ENCODE measurements at regions of chr13 and their contacts with region 1.

Region 1: DNA sequence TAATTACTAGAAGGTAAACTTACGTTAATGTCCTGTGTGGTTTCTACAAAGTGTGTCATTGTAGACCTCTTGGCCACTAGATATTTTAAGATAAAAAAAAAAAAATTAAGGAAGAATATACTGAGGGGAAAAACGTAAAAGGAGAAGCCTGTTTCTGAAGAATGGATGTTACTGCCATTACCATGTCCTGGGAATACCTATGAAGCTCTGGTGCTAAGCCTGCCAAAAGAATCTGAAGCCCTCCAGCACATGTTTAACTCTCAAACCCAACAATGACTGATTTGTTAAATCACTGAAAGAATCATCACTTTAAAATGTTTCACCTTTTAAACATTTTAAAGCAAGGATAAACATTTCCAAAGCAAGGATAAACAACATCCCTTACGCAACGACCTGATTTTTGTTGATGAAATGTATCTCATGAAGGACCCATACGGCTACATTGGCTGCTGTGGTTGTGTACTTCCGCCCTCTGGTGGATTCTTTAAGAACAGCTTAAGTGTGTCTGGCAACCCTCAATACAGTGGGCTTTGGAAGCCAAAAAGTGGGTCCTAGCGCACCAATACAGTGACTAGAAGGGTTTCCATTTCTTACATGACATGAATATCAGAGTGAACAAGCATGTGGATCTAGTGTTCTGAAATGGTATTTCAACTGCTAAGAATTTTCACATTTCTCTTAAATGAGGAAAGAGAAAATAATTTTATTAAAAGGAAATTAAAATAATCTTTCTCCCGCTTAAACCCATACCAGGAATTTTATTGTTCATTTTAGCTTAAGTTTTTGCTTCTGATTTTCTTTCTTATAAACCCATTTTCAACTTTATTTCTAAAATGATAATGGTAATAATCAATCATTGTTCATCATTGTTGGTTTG is 74.5 kb upstream of the RAP2A start:
- DNase-seq: no peak
- ATAC-seq: peak; percentile 94
- H3K4me3 Mint-ChIP-seq: no peak overlapping the region
- H3K27ac Mint-ChIP-seq: no peak overlapping the region
- H3K4me1 Mint-ChIP-seq: no peaks in the 10 kb centered on the region
- H3K27me3 Mint-ChIP-seq: no peaks in the 10 kb centered on the region
- CTCF ChIP-seq: peak; percentile 33

Region 2: DNA sequence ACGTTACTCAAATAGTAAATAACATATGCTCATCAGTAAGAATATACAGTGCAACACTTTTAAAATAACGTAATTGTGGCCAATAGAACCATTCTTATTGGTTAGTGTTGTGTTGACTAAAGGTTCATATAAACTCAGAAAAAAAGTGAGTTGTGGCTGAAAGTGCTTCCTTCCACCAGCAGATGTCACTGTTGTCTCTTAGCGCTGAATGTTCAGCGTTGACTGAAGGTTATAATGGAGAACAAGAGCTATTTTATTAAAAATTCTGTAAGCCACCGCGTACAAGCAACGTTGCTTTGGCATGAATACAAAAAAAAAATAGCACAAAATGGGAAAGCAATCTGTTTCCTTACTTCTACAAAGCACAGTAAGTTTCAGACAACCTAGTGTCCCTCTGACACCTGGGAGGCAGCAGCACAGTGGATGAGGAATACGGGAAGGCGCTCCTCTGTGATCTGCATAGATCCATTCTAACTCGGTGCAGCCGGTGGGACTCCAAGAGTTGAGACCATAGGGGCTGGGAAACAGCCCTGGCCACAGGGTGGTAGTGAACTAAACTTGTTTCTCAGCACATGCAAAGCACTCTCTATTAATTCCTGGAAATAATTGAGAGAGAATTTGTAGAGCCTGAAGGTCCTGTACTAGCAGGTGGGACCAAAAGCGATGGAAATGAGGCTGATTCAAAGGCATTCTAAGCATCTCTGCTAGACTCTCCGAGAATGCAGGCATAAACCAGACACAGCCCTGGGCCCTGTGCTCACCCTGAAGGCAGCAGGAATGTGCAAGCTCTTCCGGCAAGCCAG is 341.2 kb before region 1 on chr13:
- CTCF ChIA-PET with region 1: interaction called, 14 read pairs
- POLR2A ChIA-PET with region 1: no interaction called
- intact Hi-C with region 1: loop called (anchors 1 kb)
- DNase-seq: no peak
- ATAC-seq: peak; percentile 54
- H3K4me3 Mint-ChIP-seq: no peak overlapping the region
- H3K27ac Mint-ChIP-seq: no peak overlapping the region
- H3K4me1 Mint-ChIP-seq: peaks cover 3% of the 10 kb centered on the region
- H3K27me3 Mint-ChIP-seq: peaks cover 9% of the 10 kb centered on the region
- CTCF ChIP-seq: no peak

Region 3: GRCh38 chr13:97574926-97575325 is 215.5 kb after region 1 on chr13:
- CTCF ChIA-PET with region 1: interaction called, 5 read pairs
- POLR2A ChIA-PET with region 1: no interaction called
- intact Hi-C with region 1: loop called (anchors 2 kb)
- DNase-seq: no peak
- ATAC-seq: no peak
- H3K4me3 Mint-ChIP-seq: no peak overlapping the region
- H3K27ac Mint-ChIP-seq: no peak overlapping the region
- H3K4me1 Mint-ChIP-seq: no peaks in the 10 kb centered on the region
- H3K27me3 Mint-ChIP-seq: no peaks in the 10 kb centered on the region
- CTCF ChIP-seq: no peak

Region 4: GRCh38 chr13:97659602-97660001 is 300.2 kb after region 1 on chr13:
- CTCF ChIA-PET with region 1: no interaction called
- POLR2A ChIA-PET with region 1: no interaction called
- intact Hi-C with region 1: loop called (anchors 2 kb)
- DNase-seq: no peak
- ATAC-seq: no peak
- H3K4me3 Mint-ChIP-seq: no peak overlapping the region
- H3K27ac Mint-ChIP-seq: no peak overlapping the region
- H3K4me1 Mint-ChIP-seq: no peaks in the 10 kb centered on the region
- H3K27me3 Mint-ChIP-seq: peaks cover 3% of the 10 kb centered on the region
- CTCF ChIP-seq: no peak

Region 5: DNA sequence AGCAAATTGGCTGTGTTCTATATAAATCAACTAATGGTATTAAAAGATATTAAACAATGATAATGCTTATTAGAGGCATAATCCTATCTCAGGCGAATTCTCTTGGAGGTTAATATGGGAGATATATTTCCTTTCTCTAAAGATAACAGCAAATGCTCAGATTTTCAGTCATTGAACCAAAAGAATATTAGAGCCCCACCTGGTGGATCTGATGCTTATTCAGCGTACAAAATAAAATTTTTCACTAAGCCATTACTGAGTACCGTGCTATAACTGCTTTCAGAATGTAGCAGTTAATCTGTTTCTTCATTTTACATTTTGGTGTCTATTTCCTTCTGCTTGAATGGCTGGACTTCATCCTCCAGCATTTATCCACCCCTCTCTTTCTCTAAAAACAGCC is 450.7 kb after region 1 on chr13:
- CTCF ChIA-PET with region 1: no interaction called
- POLR2A ChIA-PET with region 1: no interaction called
- intact Hi-C with region 1: loop called (anchors 10 kb)
- DNase-seq: no peak
- ATAC-seq: no peak
- H3K4me3 Mint-ChIP-seq: no peak overlapping the region
- H3K27ac Mint-ChIP-seq: no peak overlapping the region
- H3K4me1 Mint-ChIP-seq: no peaks in the 10 kb centered on the region
- H3K27me3 Mint-ChIP-seq: peaks cover 7% of the 10 kb centered on the region
- CTCF ChIP-seq: no peak

Measured in activated B cell treated with CpG ODN at 0.5 μM for 24 hours (primary cell).